Activated naive CD4-positive, alpha-beta T cell treated with anti-CD3 and anti-CD28 coated beads for 36 hours (primary cell): ENCODE measurements at regions of chr4 and their contacts with region 1.

Region 1: GRCh38 chr4:142307857-142308256 is 538.2 kb downstream of the INPP4B start:
- DNase-seq: no peak
- H3K4me3 Mint-ChIP-seq: no peak overlapping the region
- H3K27ac Mint-ChIP-seq: no peak overlapping the region
- H3K4me1 Mint-ChIP-seq: peaks cover 35% of the 10 kb centered on the region
- H3K27me3 Mint-ChIP-seq: no peaks in the 10 kb centered on the region

Region 2: DNA sequence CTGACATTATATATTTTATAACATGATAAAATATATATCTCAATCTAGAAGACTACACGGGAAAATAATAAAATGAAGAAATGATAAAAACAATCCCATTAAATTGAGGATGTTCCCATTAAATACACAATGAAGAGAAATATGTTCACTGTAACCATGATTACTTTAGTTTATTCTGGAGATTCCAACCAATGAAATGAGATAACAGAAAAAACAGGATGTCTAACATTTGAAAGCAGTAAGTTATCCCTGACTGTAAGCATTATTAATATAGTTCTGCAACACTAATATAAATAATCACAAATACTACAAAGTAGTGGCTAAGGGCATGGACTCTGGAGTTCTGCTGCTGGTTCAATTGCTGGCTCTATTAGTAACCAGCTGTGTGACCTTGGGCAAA is 1344.0 kb before region 1 on chr4:
- CTCF ChIA-PET with region 1: no interaction called
- intact Hi-C with region 1: no loop called
- DNase-seq: no peak
- H3K4me3 Mint-ChIP-seq: no peak overlapping the region
- H3K27ac Mint-ChIP-seq: no peak overlapping the region
- H3K4me1 Mint-ChIP-seq: no peaks in the 10 kb centered on the region
- H3K27me3 Mint-ChIP-seq: peaks cover 1% of the 10 kb centered on the region

Region 3: DNA sequence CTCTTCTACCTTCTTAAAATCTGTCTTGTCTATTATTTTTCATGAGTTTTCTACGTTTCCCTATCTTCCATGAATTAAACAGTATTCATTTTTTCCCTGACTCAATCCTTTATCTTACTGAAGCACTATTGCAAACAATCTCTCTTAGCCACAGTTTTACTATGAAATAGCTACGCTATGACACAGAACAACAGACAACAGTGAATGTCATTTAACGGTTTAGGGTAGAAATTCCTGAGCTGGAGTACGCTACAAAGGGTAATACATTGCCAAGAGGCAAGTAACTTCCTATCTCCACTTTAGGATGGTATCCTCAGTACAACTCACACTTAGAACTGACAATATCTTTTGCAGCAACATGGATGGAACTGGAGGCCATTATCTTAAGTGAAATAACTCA is 14.3 kb before region 1 on chr4:
- CTCF ChIA-PET with region 1: interaction called, 6 read pairs
- intact Hi-C with region 1: loop called (anchors 1 kb)
- DNase-seq: no peak
- H3K4me3 Mint-ChIP-seq: no peak overlapping the region
- H3K27ac Mint-ChIP-seq: no peak overlapping the region
- H3K4me1 Mint-ChIP-seq: peaks cover 66% of the 10 kb centered on the region
- H3K27me3 Mint-ChIP-seq: no peaks in the 10 kb centered on the region

Region 4: GRCh38 chr4:142824368-142824767 is 516.5 kb after region 1 on chr4:
- CTCF ChIA-PET with region 1: no interaction called
- intact Hi-C with region 1: no loop called
- DNase-seq: no peak
- H3K4me3 Mint-ChIP-seq: peak overlapping the region; percentile 5
- H3K27ac Mint-ChIP-seq: peak overlapping the region; percentile 86
- H3K4me1 Mint-ChIP-seq: peaks cover 18% of the 10 kb centered on the region
- H3K27me3 Mint-ChIP-seq: no peaks in the 10 kb centered on the region